ENCODE measurements at regions of chr12 and their contacts with region 1.

Region 1: GRCh38 chr12:124551268-124552144 is 15.9 kb downstream of the NCOR2 start:
- DNase-seq: peak; percentile 94
- H3K4me3 ChIP-seq: no peak overlapping the region
- H3K27ac ChIP-seq: peak overlapping the region; percentile 71 to 81 (median 78)
- H3K4me1 ChIP-seq: peaks cover 67 to 91% (median 87%) of the 10 kb centered on the region in 4 donors
- H3K27me3 ChIP-seq: no peaks in the 10 kb centered on the region
- CTCF ChIP-seq: no peak
- EP300 ChIP-seq: no peak
- POLR2A ChIP-seq: no peak

Region 2: GRCh38 chr12:124506145-124506831 is 45.2 kb before region 1 on chr12:
- intact Hi-C with region 1: loop called (anchors 10 kb)
- DNase-seq: no peak
- H3K4me3 ChIP-seq: peak overlapping the region; percentile 12 to 37 (median 28)
- H3K27ac ChIP-seq: peak overlapping the region; percentile 79 to 98 (median 84)
- H3K4me1 ChIP-seq: peaks cover 82 to 97% (median 96%) of the 10 kb centered on the region in 4 donors
- H3K27me3 ChIP-seq: no peaks in the 10 kb centered on the region
- CTCF ChIP-seq: peak in 1 of 3 experiments; percentile 11
- EP300 ChIP-seq: no peak
- POLR2A ChIP-seq: no peak